GM13977 (cell line): ENCODE measurements at regions of chr19 and their contacts with region 1.

Region 1: GRCh38 chr19:10269333-10270179 is 1.4 kb upstream of the ICAM1 start:
- DNase-seq: peak; percentile 79
- CTCF ChIP-seq: peak; percentile 96

Region 2: DNA sequence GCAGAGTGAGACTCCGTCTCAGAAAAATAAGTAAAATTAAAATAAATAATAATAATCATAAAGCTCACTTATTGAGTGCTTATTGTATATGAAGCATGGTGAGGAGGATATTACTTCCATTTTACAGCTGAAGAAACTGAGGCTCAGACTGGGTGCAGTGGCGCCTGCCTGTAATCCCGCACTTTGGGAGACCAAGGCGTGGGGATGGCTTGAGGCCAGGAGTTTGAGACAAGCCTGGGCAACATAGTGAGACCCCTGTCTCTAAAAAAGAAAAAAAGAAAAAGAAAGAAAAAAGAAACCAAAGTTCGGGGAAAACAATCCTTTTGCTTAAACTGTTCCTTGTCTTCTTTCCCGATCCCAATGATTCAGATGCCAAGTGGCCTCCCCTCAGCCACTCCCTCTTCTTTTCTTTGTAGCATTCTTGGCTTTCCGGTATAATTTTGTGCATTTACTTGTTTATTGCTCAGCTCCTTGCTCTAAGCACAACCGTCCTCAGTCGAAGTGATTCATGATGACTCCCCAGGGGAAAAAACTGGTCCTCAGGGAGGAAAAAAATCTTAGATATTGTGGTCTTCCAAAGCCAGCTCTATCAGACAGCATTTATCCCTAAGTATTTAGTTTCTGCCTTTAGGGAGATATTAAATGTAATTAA is 148.9 kb before region 1 on chr19:
- in situ Hi-C with region 1: no loop called
- DNase-seq: no peak
- CTCF ChIP-seq: no peak

Region 3: DNA sequence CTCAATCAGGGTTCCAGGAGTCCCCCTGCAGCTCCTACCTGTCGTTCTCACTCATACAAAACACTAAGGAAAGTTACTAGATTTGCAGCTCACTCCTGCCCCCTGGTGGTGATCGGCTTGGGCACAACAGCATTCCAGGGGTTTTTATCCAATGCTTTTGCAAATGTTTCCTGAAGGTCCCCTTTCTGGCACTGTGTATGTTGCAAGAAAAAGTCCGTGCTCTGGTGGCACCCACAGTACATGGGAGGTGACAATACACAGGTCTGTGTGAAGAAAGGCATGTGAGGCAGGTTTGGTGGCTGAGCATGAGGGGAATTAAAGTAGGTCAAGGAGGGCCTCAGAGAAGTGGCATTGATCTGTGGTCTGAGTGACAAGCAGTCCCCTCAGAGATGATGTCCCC is 119.4 kb after region 1 on chr19:
- in situ Hi-C with region 1: loop called (anchors 5 kb)
- DNase-seq: peak; percentile 61
- CTCF ChIP-seq: peak; percentile 86